Pancreas (tissue), 10 donors: ENCODE measurements at regions of chr9 and their contacts with region 1.

Region 1: DNA sequence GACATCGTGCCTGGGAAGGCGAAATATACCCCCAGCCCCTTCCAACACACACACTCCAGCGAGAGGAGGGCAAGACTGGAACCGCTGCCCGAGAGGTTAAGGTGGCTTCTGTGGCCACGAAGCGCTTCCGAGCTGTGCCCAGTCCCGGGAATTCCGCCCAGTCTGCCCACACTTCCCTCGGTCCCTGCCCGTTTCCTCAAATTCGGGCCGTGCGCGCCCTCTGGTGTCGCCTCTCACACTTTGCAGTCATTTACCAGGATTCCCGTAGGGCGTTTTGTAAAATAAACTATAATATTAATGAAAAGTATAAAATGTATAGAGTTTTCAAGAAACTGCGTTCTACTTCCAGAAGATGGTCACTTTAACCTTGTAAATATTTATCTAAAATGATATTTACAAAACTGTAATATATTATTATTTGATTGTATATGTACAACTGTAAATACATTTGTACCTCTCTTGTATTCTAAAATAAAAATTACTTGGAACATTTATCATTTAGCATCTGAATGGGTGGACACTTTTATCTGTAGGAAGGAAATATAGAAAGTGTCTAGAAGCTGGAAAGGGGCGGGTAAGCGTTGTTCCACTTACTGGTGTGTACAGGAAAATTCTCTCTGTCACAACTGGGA is 11.0 kb upstream of the EXOSC2 start:
- DNase-seq: peak; percentile 74 to 92 (median 86)
- ATAC-seq: peak; percentile 78 to 94 (median 90)
- H3K4me3 ChIP-seq: peak overlapping the region in 2 of 4 donors; percentile 49 to 61
- H3K27ac ChIP-seq: no peak overlapping the region
- H3K4me1 ChIP-seq: peaks cover 0 to 7% (median 0%) of the 10 kb centered on the region in 3 donors
- H3K27me3 ChIP-seq: no peaks in the 10 kb centered on the region
- CTCF ChIP-seq: peak; percentile 60 to 82 (median 74)

Region 2: DNA sequence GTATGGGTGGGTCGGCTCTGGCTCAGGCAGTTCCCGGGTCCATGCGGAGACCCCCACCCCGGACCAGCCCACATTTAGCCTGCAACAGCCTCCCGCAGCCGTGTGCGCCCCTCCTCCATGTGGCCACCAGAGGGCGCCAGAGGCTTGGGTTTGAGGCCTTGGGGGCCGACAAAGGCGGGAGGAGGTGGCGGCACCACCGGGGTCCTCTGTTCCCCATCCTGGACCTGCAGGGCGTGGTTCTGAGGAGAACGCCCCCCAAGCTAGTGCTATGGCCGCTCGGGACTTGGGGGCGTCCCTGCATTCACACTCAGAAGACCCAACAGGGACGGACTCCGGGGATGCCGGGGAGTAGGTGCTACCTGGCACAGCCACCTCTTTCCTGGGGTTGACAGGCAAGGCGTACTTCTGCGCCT is 221.4 kb before region 1 on chr9:
- intact Hi-C with region 1: loop called in 2 of 3 experiments (anchors 2 kb)
- DNase-seq: peak; percentile 32 to 91 (median 70)
- ATAC-seq: peak; percentile 64 to 93 (median 85)
- H3K4me3 ChIP-seq: no peak overlapping the region
- H3K27ac ChIP-seq: no peak overlapping the region
- H3K4me1 ChIP-seq: no peaks in the 10 kb centered on the region
- H3K27me3 ChIP-seq: no peaks in the 10 kb centered on the region
- CTCF ChIP-seq: peak; percentile 86 to 95 (median 94)